ENCODE measurements at regions of chr2 and their contacts with region 1.

Region 1: DNA sequence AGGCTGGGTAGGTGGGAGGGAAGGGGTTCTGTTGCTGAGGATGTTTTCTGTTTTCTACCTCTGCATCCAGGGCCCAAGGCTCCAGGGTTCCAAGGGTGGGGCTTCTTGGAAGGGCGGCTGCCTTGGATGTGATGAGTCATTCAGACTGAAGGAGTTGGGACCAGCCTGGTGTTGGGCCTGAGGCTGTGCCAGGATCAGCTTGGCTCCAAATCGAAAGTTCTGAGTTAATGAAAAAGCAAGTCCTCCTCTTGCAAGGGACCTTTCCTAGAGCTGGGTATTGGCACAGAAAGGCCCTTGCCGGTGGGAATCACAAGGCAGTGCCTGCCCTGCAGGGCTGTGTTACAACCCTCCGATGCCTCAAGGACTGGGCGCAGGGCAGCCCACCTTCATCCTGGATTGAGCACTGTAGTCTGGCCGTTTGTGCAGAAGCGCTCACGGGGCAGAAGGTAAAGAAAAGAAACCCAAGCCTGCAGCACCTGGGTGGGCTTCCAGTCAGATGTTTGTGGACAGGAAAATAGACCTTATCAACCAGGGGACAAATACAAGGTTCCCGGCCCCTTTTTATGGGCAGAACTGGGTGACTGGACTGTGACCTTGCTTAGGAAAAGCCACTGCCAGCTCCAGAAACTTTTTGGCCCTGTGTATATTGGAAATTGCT is 52.5 kb upstream of the MCFD2 start:
- DNase-seq: peak; percentile 90 to 91
- H3K4me3 ChIP-seq: peak overlapping the region; percentile 36; the same call in 1 of the 2 replicates
- H3K27ac ChIP-seq: peak overlapping the region; percentile 93
- H3K4me1 ChIP-seq: peaks cover 89% of the 10 kb centered on the region
- H3K27me3 ChIP-seq: no peaks in the 10 kb centered on the region
- CTCF ChIP-seq: no peak

Region 2: DNA sequence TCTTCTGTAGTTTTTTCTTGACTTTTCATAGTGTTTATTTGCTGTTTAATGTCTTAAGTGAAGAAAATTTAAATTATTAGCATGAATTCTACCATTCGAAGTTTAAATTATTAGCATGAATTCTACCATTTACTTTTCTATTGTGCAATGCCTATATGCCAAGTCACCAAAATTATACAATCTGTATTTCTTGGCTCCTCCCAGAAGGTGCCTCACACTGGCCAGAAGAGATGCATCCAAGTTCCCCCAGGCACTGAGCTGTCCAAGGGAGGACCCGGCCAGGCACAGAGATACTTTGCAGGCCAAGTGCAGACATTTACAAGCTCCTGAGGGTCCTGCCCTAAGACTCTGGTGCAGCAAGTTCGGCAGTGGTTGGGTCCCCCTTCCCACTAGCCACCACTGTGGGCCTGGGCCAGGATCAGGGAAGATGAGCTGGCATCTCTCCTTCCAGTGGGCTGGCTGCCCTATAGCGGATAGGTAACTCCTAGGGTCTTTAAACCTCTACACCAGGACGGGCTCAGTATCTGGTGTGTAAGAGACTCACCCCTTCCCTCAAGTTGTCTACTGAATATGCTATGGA is 457.4 kb before region 1 on chr2:
- CTCF ChIA-PET with region 1: no interaction called
- POLR2A ChIA-PET with region 1: no interaction called
- intact Hi-C with region 1: no loop called
- DNase-seq: no peak
- H3K4me3 ChIP-seq: no peak overlapping the region
- H3K27ac ChIP-seq: no peak overlapping the region
- H3K4me1 ChIP-seq: no peaks in the 10 kb centered on the region
- H3K27me3 ChIP-seq: no peaks in the 10 kb centered on the region
- CTCF ChIP-seq: no peak

Region 3: GRCh38 chr2:46915811-46916630 is 52.1 kb before region 1 on chr2:
- CTCF ChIA-PET with region 1: interaction called, 4 read pairs
- POLR2A ChIA-PET with region 1: interaction called, 15 read pairs
- intact Hi-C with region 1: loop called (anchors 1 kb)
- DNase-seq: peak; percentile 93
- H3K4me3 ChIP-seq: peak overlapping the region; percentile 76
- H3K27ac ChIP-seq: peak overlapping the region; percentile 75
- H3K4me1 ChIP-seq: peaks cover 60% of the 10 kb centered on the region
- H3K27me3 ChIP-seq: no peaks in the 10 kb centered on the region
- CTCF ChIP-seq: no peak

Region 4: GRCh38 chr2:46984642-46985476 is 16.7 kb after region 1 on chr2:
- CTCF ChIA-PET with region 1: interaction called, 6 read pairs
- POLR2A ChIA-PET with region 1: interaction called, 3 read pairs
- intact Hi-C with region 1: loop called (anchors 1 kb)
- DNase-seq: peak; percentile 78 to 96
- H3K4me3 ChIP-seq: no peak overlapping the region
- H3K27ac ChIP-seq: peak overlapping the region; percentile 86
- H3K4me1 ChIP-seq: peaks cover 68% of the 10 kb centered on the region
- H3K27me3 ChIP-seq: no peaks in the 10 kb centered on the region
- CTCF ChIP-seq: no peak

Region 5: DNA sequence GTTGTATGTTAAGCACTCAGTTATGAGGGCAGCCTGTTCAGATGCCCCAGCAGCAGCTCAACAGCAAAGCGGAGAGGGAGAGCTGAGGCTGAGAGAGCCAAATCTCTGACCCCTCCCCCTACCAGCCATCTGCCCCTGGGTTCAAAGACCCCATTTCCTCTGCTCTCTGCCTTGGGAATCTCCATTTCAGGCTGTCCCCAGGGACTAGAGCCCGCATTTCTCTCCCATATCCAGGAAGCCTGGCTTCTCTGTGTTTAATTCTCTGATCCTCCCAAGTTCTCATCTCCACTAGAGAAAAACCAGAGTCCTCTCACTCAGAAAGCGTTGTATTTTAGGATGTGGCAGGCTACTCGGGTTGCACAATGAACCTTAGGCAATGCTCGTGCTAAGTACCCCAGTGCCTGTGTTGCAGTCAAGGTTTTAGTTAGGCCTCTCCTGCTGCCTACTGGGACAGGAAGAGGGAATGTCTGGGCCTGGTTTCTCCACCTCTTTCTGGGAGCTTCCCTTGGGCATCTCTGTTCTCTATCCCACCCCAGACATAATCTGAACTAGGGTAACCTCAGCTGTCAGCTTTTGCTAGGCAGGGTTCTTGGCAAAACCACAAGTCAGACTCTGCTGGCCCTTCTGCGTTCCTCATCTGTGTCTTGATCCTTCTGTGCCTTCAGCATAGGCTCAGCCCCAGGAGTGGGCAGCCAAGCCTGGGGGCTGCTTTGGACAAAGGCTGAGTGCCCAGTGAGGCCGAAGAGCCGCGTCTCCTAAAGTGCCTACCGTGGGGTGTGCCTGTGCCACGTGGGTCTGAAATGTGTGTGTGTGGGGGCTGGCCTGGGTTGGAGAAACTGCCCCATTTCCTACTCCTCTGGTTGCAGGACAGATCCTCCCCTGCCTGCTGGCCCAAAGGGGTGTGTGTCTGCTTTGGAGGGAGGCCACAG is 90.1 kb after region 1 on chr2:
- CTCF ChIA-PET with region 1: no interaction called
- POLR2A ChIA-PET with region 1: interaction called, 20 read pairs
- intact Hi-C with region 1: no loop called
- DNase-seq: no peak
- H3K4me3 ChIP-seq: no peak overlapping the region
- H3K27ac ChIP-seq: peak overlapping the region; percentile 20; the same call in 1 of the 2 replicates
- H3K4me1 ChIP-seq: 0 out of 2 replicates have a peak, but pooled peaks cover 2% of the 10 kb centered on the region
- H3K27me3 ChIP-seq: no peaks in the 10 kb centered on the region
- CTCF ChIP-seq: no peak

Region 6: DNA sequence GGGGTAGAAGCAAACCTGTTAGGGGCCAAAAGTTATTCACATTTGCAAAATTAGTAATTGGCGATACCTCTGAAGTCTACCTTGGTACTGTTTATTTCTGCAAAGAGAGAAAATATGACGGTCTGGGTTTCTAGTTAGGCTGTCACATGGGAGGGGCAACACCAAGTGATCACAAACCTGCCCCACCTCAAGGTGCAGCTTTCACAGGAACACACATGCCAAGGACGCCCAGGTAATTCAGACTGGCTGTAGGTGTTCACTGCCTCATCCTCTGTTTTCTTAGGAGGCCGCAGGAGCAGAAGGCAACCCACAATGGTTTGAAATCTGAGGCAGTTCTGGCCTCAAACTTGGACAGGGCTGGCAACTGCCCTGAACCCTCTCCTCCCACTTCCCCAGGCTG is 130.8 kb after region 1 on chr2:
- CTCF ChIA-PET with region 1: no interaction called
- POLR2A ChIA-PET with region 1: no interaction called
- intact Hi-C with region 1: no loop called
- DNase-seq: no peak
- H3K4me3 ChIP-seq: no peak overlapping the region
- H3K27ac ChIP-seq: no peak overlapping the region
- H3K4me1 ChIP-seq: no peaks in the 10 kb centered on the region
- H3K27me3 ChIP-seq: no peaks in the 10 kb centered on the region
- CTCF ChIP-seq: no peak

Measured in PC-9 (cell line).